Activated T-helper 2 cell treated with anti-CD3 and anti-CD28 coated beads, Interferon-gamma antibody, Interleukin-2, Interleukin-4, amounts not matched to agents 10 μg/mL and 5 μg/mL and 100 μg/mL, durations not matched to agents 14 hours and 24 hours and 36 hours (primary cell): ENCODE measurements at regions of chr18 and their contacts with region 1.

Region 1: DNA sequence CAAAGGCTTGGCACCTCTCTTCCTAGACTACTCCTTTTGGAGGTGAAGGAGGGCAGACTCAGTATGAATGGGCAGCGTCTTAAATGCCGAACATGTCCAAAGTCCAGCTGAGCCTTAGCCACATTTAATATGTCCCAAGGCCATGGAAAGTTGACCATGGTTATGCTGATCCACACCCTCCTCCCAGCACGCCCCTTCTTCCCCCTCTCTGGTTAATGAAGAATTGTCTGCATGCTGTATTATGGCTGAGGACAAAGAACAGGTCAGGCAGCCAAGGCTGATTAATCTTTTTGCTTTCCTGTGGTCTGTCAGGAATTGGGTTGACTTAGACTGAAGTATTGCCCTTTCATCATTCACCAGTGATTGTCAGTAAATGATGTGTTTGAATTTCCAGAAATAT is 5.8 kb upstream of the MYOM1 start:
- DNase-seq: no peak
- H3K4me3 Mint-ChIP-seq: no peak overlapping the region
- H3K27ac Mint-ChIP-seq: no peak overlapping the region
- H3K4me1 Mint-ChIP-seq: peaks cover 10% of the 10 kb centered on the region
- H3K27me3 Mint-ChIP-seq: peaks cover 22% of the 10 kb centered on the region

Region 2: GRCh38 chr18:3194947-3195612 is 30.5 kb before region 1 on chr18:
- intact Hi-C with region 1: loop called (anchors 5 kb)
- DNase-seq: no peak
- H3K4me3 Mint-ChIP-seq: no peak overlapping the region
- H3K27ac Mint-ChIP-seq: no peak overlapping the region
- H3K4me1 Mint-ChIP-seq: no peaks in the 10 kb centered on the region
- H3K27me3 Mint-ChIP-seq: peaks cover 18% of the 10 kb centered on the region

Region 3: GRCh38 chr18:3283908-3284307 is 58.3 kb after region 1 on chr18:
- intact Hi-C with region 1: no loop called
- DNase-seq: no peak
- H3K4me3 Mint-ChIP-seq: no peak overlapping the region
- H3K27ac Mint-ChIP-seq: no peak overlapping the region
- H3K4me1 Mint-ChIP-seq: peaks cover 5% of the 10 kb centered on the region
- H3K27me3 Mint-ChIP-seq: peaks cover 3% of the 10 kb centered on the region

Region 4: GRCh38 chr18:3321133-3321812 is 95.7 kb after region 1 on chr18:
- intact Hi-C with region 1: no loop called
- DNase-seq: no peak
- H3K4me3 Mint-ChIP-seq: no peak overlapping the region
- H3K27ac Mint-ChIP-seq: no peak overlapping the region
- H3K4me1 Mint-ChIP-seq: peaks cover 33% of the 10 kb centered on the region
- H3K27me3 Mint-ChIP-seq: peaks cover 6% of the 10 kb centered on the region